BJ (cell line): ENCODE measurements at regions of chr7 and their contacts with region 1.

Region 1: DNA sequence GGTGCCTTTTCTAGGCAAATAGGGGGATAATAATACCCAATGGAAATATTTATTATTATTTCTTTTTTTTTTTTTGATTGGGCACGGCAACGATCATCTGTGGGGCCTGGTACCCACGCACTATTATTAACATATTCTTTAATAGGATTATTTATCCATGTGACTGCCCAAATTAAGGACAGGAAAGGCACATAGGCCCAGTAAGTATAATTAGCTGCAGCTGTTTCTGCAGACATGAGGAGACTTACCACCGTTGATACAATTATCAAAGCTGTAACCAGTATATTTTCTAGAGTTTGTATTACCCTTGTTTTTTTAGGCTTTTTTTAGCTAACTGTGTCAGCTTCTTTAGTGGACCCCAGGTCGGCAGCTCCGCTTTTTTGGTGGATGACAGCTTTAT is 25.2 kb upstream of the GUSB start:
- DNase-seq: no peak
- H3K4me3 ChIP-seq: no peak overlapping the region
- H3K27me3 ChIP-seq: no peaks in the 10 kb centered on the region
- CTCF ChIP-seq: no peak

Region 2: DNA sequence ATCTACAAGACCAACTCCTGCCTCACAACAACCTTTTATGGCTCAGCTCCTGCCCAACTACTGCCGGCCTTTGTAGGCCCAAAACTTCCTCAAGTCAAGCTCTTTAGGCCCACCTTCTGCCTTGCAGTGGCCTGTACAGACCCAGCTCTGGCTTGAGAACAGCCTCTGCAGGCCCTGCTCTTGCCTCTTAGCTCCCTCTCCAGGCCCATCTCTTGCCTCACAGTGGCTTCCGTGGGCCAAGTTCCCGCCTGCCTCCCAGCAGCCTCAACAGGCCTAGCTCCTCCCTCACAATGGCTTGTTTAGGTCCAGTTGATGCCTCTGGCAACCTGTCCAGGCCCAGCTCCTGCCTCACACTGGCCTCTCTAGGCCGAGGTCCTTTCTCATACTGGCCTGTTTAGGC is 166.8 kb before region 1 on chr7:
- CTCF ChIA-PET with region 1: no interaction called
- POLR2A ChIA-PET with region 1: interaction called, 16 read pairs
- DNase-seq: no peak
- H3K4me3 ChIP-seq: no peak overlapping the region
- H3K27me3 ChIP-seq: no peaks in the 10 kb centered on the region
- CTCF ChIP-seq: no peak

Region 3: GRCh38 chr7:66039094-66039670 is 31.9 kb after region 1 on chr7:
- CTCF ChIA-PET with region 1: no interaction called
- POLR2A ChIA-PET with region 1: no interaction called
- DNase-seq: no peak
- H3K4me3 ChIP-seq: no peak overlapping the region
- H3K27me3 ChIP-seq: no peaks in the 10 kb centered on the region
- CTCF ChIP-seq: no peak